Panc1 (cell line): ENCODE measurements at regions of chr2 and their contacts with region 1.

Region 1: GRCh38 chr2:68925295-68925896 is 27.3 kb downstream of the GKN2 start:
- DNase-seq: peak; percentile 66
- ATAC-seq: peak; percentile 77
- H3K4me3 ChIP-seq: no peak overlapping the region
- H3K27ac ChIP-seq: no peak overlapping the region
- H3K4me1 ChIP-seq: 0 out of 2 replicates have a peak, but pooled peaks cover 2% of the 10 kb centered on the region
- H3K27me3 ChIP-seq: no peaks in the 10 kb centered on the region
- CTCF ChIP-seq: peak; percentile 98

Region 2: DNA sequence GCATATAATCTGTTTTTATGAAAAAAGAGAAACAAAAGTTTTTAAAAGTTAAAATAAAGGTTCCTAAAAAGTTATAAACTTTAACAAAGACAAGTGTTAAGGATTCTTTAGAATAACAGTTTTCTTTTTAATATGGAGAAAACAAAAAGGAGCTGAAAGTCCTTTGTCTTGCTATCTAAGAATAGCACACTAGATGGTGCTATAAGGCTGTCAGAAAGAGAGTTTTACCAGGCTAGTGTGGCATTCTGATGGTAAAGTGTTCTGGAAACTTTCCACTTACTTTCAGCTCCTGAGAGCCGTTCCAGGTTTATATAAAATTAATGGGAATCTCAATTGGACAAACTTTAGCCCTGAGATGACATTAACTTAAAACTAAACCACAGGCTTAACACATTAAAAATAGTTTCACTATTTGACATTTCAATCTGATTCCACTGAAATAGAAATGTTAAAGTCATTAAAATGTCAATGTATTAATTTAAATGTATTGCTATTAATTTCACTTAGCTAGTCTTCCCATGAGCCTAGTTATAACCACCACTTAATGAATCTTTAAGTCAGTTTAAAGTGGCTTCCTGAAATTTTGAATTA is 462.0 kb before region 1 on chr2:
- CTCF ChIA-PET with region 1: interaction called, 14 read pairs
- POLR2A ChIA-PET with region 1: no interaction called
- in situ Hi-C with region 1: no loop called
- intact Hi-C with region 1: no loop called
- DNase-seq: no peak
- ATAC-seq: no peak
- H3K4me3 ChIP-seq: no peak overlapping the region
- H3K27ac ChIP-seq: no peak overlapping the region
- H3K4me1 ChIP-seq: peaks cover 7% of the 10 kb centered on the region; the same call in 1 of the 2 replicates
- H3K27me3 ChIP-seq: no peaks in the 10 kb centered on the region
- CTCF ChIP-seq: peak; percentile 72; the same call in 1 of the 2 replicates

Region 3: GRCh38 chr2:68594674-68595492 is 330.5 kb before region 1 on chr2:
- CTCF ChIA-PET with region 1: no interaction called
- POLR2A ChIA-PET with region 1: no interaction called
- in situ Hi-C with region 1: no loop called
- intact Hi-C with region 1: no loop called
- DNase-seq: peak; percentile 35
- ATAC-seq: peak; percentile 77; the same call in 1 of the 2 replicates
- H3K4me3 ChIP-seq: no peak overlapping the region
- H3K27ac ChIP-seq: no peak overlapping the region
- H3K4me1 ChIP-seq: no peaks in the 10 kb centered on the region
- H3K27me3 ChIP-seq: no peaks in the 10 kb centered on the region; the same call in 1 of the 2 replicates
- CTCF ChIP-seq: peak; percentile 86

Region 4: GRCh38 chr2:68709421-68709911 is 215.9 kb before region 1 on chr2:
- CTCF ChIA-PET with region 1: interaction called, 31 read pairs
- POLR2A ChIA-PET with region 1: no interaction called
- in situ Hi-C with region 1: no loop called
- intact Hi-C with region 1: loop called (anchors 2 kb)
- DNase-seq: peak; percentile 48
- ATAC-seq: peak; percentile 96
- H3K4me3 ChIP-seq: no peak overlapping the region
- H3K27ac ChIP-seq: no peak overlapping the region
- H3K4me1 ChIP-seq: no peaks in the 10 kb centered on the region
- H3K27me3 ChIP-seq: peaks cover 6% of the 10 kb centered on the region; the same call in 1 of the 2 replicates
- CTCF ChIP-seq: peak; percentile 84

Region 5: DNA sequence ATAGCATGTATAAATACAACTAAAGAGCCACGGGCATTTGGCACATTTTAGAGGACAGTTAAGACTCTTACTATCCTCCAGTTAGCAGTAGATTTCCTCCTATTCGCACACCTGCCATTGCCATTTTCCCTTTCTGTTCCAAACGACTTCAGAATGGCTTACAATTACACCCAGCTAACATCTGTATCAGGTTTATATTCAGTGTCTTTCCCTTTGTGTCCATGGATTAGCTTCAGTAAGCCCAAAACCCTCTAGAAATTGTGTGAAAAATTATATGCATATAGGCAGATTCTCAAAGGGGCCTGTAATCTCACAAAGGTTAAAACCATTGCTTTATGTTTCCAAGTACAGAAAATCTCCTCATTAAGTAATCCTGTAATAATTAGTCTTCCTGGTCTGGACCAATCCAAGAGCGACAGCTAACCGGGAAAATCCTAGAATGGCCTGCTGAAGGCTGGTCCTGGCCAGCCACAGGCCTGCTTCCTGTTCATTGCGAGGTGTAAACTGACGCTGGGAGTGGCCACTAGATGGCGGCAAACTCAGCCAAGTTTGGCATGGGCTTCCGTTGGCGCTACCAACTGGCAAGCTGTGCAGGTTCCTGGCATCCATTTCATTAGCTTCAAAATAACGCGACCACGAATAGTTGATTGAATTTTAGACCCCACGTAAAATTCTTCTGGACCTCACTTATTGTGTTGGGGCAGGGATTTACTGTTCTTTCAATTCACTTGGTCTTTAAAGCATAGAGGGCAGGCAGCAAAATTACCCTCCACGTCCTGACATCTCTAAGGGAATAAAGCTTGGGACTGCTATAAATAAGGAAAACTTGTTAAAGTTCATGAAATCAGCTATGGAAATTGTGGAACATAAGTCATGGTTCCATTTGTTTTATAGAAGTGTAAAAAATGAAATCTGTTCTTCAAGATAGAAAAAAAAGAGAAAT is 173.7 kb before region 1 on chr2:
- CTCF ChIA-PET with region 1: interaction called, 7 read pairs
- POLR2A ChIA-PET with region 1: no interaction called
- in situ Hi-C with region 1: no loop called
- intact Hi-C with region 1: loop called (anchors 1 kb)
- DNase-seq: peak; percentile 74
- ATAC-seq: peak; percentile 99
- H3K4me3 ChIP-seq: no peak overlapping the region
- H3K27ac ChIP-seq: no peak overlapping the region
- H3K4me1 ChIP-seq: no peaks in the 10 kb centered on the region
- H3K27me3 ChIP-seq: no peaks in the 10 kb centered on the region
- CTCF ChIP-seq: peak; percentile 93